WTC11 (cell line): ENCODE measurements at regions of chr16 and their contacts with region 1.

Region 1: GRCh38 chr16:89706507-89707263 is 5.2 kb upstream of the SPATA2L start:
- DNase-seq: no peak
- ATAC-seq: no peak
- H3K4me3 Mint-ChIP-seq: peak overlapping the region; percentile 52; the same call in 1 of the 2 replicates
- H3K27ac Mint-ChIP-seq: no peak overlapping the region
- H3K4me1 Mint-ChIP-seq: peaks cover 17% of the 10 kb centered on the region
- H3K27me3 Mint-ChIP-seq: peaks cover 40% of the 10 kb centered on the region
- CTCF ChIP-seq: no peak

Region 2: DNA sequence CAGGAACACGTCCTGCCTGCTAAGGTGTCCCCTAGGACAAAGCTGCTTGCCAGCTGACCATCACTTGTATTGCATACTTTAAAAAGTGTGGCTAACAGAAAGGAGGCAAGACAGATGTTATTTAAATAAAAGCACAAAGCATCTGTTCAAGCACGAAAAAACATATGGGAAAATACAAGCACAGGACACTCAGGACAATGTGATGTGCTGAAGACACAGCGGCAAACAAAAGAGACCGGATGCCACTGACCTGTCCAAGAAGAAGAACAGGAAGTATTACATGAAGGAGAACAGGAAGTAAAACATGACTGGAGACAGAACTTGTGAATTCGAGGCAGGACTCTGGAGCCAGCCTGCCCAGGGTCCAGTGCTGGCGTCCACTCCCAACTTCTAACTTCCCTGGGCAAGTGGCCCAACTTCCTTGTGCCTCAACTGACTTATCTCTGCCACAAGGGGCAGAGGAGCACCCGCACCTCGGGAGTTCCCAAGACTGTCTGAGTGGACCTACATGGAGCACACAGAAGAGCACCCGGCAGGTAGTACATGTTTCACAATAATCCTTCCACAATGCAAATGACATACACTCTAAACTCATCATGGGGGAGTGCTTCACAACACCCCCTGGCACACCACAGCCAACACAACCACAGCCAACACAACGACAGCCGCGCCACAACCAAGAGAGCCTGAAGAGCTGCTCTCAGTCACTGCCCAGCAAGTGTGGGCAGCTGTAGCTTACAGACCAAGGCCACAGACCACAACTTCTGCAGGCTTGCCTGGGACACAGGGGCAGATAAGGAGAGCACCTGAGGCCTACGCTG is 253.0 kb before region 1 on chr16:
- CTCF ChIA-PET with region 1: no interaction called
- POLR2A ChIA-PET with region 1: no interaction called
- DNase-seq: no peak
- ATAC-seq: peak; percentile 74
- H3K4me3 Mint-ChIP-seq: no peak overlapping the region
- H3K27ac Mint-ChIP-seq: peak overlapping the region; percentile 81; the same call in 1 of the 2 replicates
- H3K4me1 Mint-ChIP-seq: peaks cover 37% of the 10 kb centered on the region
- H3K27me3 Mint-ChIP-seq: no peaks in the 10 kb centered on the region
- CTCF ChIP-seq: 0 out of 2 replicates have a peak, but pooled peaks have one; percentile 22

Region 3: DNA sequence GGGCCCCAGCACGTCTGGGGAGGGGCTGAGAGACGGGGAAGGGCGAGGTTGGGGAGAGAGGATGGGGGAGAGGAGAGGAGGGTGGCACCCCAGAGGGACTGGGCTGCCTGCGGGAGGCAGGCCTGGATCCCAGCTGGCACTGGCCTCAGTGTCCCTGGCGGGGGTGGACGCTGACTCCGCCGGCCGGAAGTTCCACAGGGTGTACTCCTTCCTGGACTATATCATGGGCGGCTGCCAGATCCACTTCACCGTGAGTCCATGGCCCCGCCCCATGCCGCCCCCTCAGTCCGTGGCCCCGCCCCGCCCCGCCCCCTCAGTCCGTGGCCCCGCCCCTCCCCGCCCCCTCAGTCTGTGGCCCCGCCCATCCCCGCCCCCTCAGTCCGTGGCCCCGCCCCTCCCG is 119.8 kb before region 1 on chr16:
- CTCF ChIA-PET with region 1: no interaction called
- POLR2A ChIA-PET with region 1: no interaction called
- DNase-seq: no peak
- ATAC-seq: peak; percentile 34; the same call in 1 of the 2 replicates
- H3K4me3 Mint-ChIP-seq: no peak overlapping the region
- H3K27ac Mint-ChIP-seq: no peak overlapping the region
- H3K4me1 Mint-ChIP-seq: no peaks in the 10 kb centered on the region
- H3K27me3 Mint-ChIP-seq: no peaks in the 10 kb centered on the region
- CTCF ChIP-seq: no peak

Region 4: DNA sequence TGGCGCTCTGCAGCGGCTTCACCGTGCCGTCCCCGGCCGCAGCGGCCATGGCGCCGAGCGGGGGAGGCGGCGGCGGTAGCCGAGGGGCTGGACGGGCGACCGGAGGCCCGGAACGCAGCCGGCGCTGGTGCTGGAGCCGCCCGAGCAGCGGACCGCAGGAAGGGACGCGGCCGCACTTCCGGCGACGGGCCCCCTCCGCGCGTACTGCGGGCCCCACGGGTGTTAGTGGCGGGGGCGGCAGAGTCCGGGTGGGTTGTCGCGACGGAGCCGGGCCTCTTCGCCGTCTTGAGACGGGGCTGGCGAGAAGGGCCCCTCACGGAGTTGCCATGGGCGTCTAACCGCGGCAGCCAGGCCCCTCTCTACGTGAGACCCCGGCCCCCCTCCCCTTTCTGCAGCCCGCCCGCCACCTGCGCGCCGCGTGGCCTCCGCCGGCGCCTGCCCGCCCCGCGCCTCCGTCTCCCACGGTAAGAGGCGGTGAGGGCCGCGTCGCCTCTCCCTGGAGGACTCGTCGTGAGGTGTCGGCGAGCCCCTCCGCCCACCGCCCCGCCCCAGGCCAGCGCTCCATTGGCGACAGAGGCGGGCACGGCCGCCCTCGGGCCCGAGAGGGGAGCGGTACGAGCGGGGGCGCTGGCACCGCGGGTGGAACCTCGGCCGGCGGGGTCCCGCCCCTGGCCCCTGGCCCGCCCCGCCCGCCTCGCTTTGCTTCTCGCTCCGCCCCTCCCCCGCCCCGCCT is 14.3 kb after region 1 on chr16 and contains the starts of genes VPS9D1 and ZNF276:
- CTCF ChIA-PET with region 1: interaction called, 17 read pairs
- POLR2A ChIA-PET with region 1: interaction called, 5 read pairs
- DNase-seq: peak; percentile 82
- ATAC-seq: peak; percentile 55
- H3K4me3 Mint-ChIP-seq: peak within 1 kb of the TSS; percentile 79
- H3K27ac Mint-ChIP-seq: 0 out of 2 replicates have a peak within 1 kb of the TSS, but pooled peaks have one; percentile 53
- H3K4me1 Mint-ChIP-seq: peaks cover 17% of the 10 kb centered on the region
- H3K27me3 Mint-ChIP-seq: peaks cover 55% of the 10 kb centered on the region
- CTCF ChIP-seq: no peak
- total RNA-seq, gene VPS9D1: 3.8 to 5.6 TPM (median 4.2 TPM) in 3 replicates
- total RNA-seq, gene ZNF276: 13.9 to 17.2 TPM (median 16.6 TPM) in 3 replicates

Region 5: DNA sequence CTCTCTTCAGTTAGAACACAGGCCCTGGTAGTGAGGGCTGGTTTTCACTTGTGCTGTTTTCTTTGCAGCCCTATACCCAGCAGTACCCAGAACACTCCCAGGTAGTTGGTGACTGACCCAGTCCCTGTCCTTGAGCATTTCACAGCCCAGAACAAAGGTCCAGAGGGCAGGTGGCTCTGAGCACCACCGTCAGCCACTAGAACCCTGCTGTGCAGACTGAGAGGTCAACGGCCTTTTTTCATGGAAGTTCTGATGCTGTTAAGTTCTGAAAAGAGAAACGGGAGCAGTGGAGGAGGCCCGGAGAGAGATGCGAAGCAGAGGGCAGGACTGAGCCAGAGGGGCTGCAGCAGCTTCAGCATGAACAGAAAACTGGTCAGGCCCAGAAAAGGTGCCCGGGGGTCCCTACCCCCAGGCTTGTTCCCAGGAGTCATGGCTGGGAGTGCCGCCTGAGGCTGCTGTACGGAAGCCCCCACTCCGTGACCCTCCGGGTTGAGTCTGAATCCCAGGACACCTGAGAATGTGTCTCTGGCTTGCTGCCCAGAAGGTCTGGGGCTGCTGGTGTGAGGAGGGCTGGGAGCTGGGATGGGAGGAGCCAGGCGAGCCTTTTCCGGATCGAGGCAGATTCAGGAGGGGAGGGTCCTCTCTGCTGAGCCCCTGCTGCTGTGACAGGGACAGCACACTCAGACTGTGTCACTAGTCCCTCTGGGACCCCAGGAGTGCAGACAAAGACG is 23.3 kb after region 1 on chr16:
- CTCF ChIA-PET with region 1: interaction called, 10 read pairs
- POLR2A ChIA-PET with region 1: no interaction called
- DNase-seq: no peak
- ATAC-seq: peak; percentile 41
- H3K4me3 Mint-ChIP-seq: no peak overlapping the region
- H3K27ac Mint-ChIP-seq: peak overlapping the region; percentile 61; the same call in 1 of the 2 replicates
- H3K4me1 Mint-ChIP-seq: peaks cover 13% of the 10 kb centered on the region
- H3K27me3 Mint-ChIP-seq: peaks cover 6% of the 10 kb centered on the region
- CTCF ChIP-seq: no peak

Region 6: GRCh38 chr16:89737341-89738071 is 30.8 kb after region 1 on chr16:
- CTCF ChIA-PET with region 1: interaction called, 16 read pairs
- POLR2A ChIA-PET with region 1: no interaction called
- DNase-seq: no peak
- ATAC-seq: no peak
- H3K4me3 Mint-ChIP-seq: no peak overlapping the region
- H3K27ac Mint-ChIP-seq: no peak overlapping the region
- H3K4me1 Mint-ChIP-seq: no peaks in the 10 kb centered on the region
- H3K27me3 Mint-ChIP-seq: no peaks in the 10 kb centered on the region
- CTCF ChIP-seq: no peak

Region 7: DNA sequence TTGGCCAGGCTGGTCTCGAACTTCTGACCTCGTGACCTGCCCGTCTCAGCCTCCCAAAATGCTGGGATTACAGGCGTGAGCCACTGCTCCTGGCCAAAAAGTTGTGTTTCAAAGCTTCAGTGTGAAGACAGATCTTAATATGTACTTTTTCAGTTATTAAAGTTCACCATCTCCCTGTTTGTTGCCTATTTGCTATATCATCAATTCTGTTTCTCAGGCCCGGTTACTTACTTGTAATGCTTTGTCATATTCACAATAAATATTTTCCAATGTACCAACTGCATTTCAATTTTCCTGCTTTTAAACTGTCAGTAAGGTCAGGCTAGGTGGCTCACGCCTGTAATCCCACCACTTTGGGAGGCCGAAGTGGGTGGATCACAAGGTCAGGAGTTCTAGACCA is 87.3 kb after region 1 on chr16:
- CTCF ChIA-PET with region 1: interaction called, 18 read pairs
- POLR2A ChIA-PET with region 1: no interaction called
- DNase-seq: no peak
- ATAC-seq: no peak
- H3K4me3 Mint-ChIP-seq: no peak overlapping the region
- H3K27ac Mint-ChIP-seq: no peak overlapping the region
- H3K4me1 Mint-ChIP-seq: no peaks in the 10 kb centered on the region
- H3K27me3 Mint-ChIP-seq: no peaks in the 10 kb centered on the region
- CTCF ChIP-seq: no peak

Region 8: GRCh38 chr16:89860747-89861304 is 154.1 kb after region 1 on chr16:
- CTCF ChIA-PET with region 1: interaction called, 10 read pairs
- POLR2A ChIA-PET with region 1: no interaction called
- DNase-seq: peak; percentile 91
- ATAC-seq: peak; percentile 98
- H3K4me3 Mint-ChIP-seq: no peak overlapping the region
- H3K27ac Mint-ChIP-seq: no peak overlapping the region
- H3K4me1 Mint-ChIP-seq: no peaks in the 10 kb centered on the region
- H3K27me3 Mint-ChIP-seq: no peaks in the 10 kb centered on the region
- CTCF ChIP-seq: peak; percentile 99

Region 9: DNA sequence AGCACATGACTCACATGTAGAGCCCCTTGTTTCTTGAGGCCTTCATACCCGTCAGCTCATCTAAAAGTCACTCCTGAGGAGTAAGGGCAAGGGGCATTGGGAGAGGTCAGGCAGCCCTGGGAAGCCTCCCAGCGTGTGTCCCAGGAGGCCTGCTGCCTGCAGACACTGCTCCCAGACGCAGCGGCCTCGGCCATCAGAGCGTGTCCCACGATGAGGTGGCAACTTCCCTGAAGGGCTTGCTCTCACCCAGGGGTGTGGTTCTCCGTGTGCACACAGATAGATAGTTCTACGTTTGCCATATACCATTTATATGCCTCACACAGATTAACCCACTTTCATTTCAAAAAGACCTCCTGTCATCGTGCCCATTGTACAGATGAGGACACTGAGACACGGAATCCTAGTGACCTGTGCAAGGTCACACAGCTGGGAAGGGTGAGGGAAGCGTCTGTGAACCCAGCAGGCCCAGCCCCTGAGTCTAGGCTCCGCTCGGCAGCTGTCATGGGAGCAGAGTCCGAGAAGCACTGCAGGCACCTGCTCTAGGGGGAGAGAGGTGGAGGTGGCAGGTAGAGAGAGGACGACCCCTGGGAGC is 224.7 kb after region 1 on chr16:
- CTCF ChIA-PET with region 1: no interaction called
- POLR2A ChIA-PET with region 1: no interaction called
- DNase-seq: no peak
- ATAC-seq: no peak
- H3K4me3 Mint-ChIP-seq: no peak overlapping the region
- H3K27ac Mint-ChIP-seq: no peak overlapping the region
- H3K4me1 Mint-ChIP-seq: no peaks in the 10 kb centered on the region
- H3K27me3 Mint-ChIP-seq: no peaks in the 10 kb centered on the region
- CTCF ChIP-seq: no peak